ENCODE measurements at regions of chr7 and their contacts with region 1.

Region 1: DNA sequence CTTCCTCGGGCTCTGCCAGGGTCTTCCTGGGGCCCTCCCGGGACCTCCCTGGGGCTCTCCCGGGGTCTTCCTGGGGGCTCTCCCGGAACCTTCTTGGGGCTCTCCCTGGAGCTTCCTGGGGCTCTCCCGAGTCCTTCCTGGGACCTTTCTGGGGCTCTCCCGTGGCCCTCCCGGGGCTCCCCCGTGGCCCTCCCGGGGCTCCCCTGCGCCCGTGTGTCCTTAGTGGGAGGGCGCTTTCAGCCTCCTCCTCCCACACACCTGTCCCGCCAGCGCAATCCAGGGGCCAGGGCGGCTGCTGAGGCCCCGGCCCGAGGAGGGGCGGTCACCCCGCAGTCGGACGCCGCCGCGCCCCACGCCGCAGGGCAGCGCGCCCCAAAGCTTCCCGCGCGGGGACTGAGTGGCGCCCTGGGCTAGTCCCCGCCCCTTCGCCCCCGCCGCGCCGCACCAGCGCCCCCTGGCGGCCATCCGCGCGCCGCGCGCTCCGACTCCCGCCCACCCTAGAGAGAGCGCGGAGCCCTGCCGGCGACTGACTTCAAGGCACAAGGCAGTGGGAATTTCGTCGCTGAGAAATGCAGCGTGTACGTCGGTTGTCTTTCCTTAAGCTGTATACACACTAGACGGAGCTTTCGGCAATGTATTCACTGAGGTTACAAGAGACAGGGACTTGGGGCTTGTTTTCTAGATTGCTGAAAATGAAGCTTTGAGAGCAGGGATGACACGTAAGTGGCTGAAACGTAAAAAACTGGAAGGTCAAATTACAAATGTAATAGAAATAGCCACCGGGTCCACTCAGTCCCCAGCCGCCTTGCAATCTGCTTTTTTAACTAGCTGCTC is 47.1 kb downstream of the INSIG1 start:
- DNase-seq: peak; percentile 87
- ATAC-seq: peak; percentile 77
- H3K4me3 Mint-ChIP-seq: peak overlapping the region; percentile 79
- H3K27ac Mint-ChIP-seq: no peak overlapping the region
- H3K4me1 Mint-ChIP-seq: peaks cover 13% of the 10 kb centered on the region
- H3K27me3 Mint-ChIP-seq: no peaks in the 10 kb centered on the region
- CTCF ChIP-seq: peak; percentile 77

Region 2: DNA sequence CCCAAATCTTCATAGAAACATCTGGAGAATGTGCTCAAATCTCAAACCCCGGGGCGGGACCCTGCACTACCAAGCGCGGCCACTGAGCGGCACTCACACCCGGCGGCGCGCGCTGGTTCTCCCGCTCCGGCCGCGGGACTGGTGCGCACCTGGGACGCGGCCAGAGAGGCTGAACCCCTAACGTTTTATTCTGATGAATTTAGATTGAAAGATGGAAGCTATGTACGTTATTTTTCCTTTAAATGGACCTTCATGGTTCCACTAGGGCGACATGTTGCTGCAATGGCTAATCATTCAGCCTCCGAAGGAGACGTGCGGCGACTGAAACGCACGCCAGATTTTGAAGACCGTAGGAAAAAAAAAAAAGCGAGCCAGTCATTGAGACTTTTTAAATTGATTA is 154.1 kb before region 1 on chr7:
- CTCF ChIA-PET with region 1: interaction called, 24 read pairs
- POLR2A ChIA-PET with region 1: interaction called, 4 read pairs
- intact Hi-C with region 1: loop called (anchors 1 kb)
- DNase-seq: peak; percentile 70
- ATAC-seq: peak; percentile 94
- H3K4me3 Mint-ChIP-seq: no peak overlapping the region
- H3K27ac Mint-ChIP-seq: no peak overlapping the region
- H3K4me1 Mint-ChIP-seq: peaks cover 8% of the 10 kb centered on the region
- H3K27me3 Mint-ChIP-seq: peaks cover 7% of the 10 kb centered on the region
- CTCF ChIP-seq: no peak

Region 3: GRCh38 chr7:155371884-155372781 is 27.3 kb after region 1 on chr7:
- CTCF ChIA-PET with region 1: interaction called, 10 read pairs
- POLR2A ChIA-PET with region 1: no interaction called
- intact Hi-C with region 1: no loop called
- DNase-seq: peak; percentile 43
- ATAC-seq: peak; percentile 70
- H3K4me3 Mint-ChIP-seq: peak overlapping the region; percentile 86
- H3K27ac Mint-ChIP-seq: no peak overlapping the region
- H3K4me1 Mint-ChIP-seq: peaks cover 38% of the 10 kb centered on the region
- H3K27me3 Mint-ChIP-seq: peaks cover 56% of the 10 kb centered on the region
- CTCF ChIP-seq: no peak